ENCODE measurements at regions of chr14 and their contacts with region 1.

Region 1: GRCh38 chr14:68140111-68140741 is 320.6 kb downstream of the RAD51B start:
- DNase-seq: peak; percentile 99
- ATAC-seq: peak; percentile 70
- H3K4me3 ChIP-seq: peak overlapping the region; percentile 29; the same call in 1 of the 2 replicates
- H3K27ac ChIP-seq: peak overlapping the region; percentile 93
- H3K4me1 ChIP-seq: peaks cover 75% of the 10 kb centered on the region
- H3K27me3 ChIP-seq: no peaks in the 10 kb centered on the region
- CTCF ChIP-seq: no peak

Region 2: GRCh38 chr14:68016255-68016914 is 123.8 kb before region 1 on chr14:
- CTCF ChIA-PET with region 1: no interaction called
- POLR2A ChIA-PET with region 1: no interaction called
- intact Hi-C with region 1: loop called (anchors 5 kb)
- DNase-seq: no peak
- ATAC-seq: peak; percentile 44
- H3K4me3 ChIP-seq: no peak overlapping the region
- H3K27ac ChIP-seq: no peak overlapping the region
- H3K4me1 ChIP-seq: peaks cover 28% of the 10 kb centered on the region
- H3K27me3 ChIP-seq: no peaks in the 10 kb centered on the region
- CTCF ChIP-seq: no peak

Region 3: GRCh38 chr14:68047906-68048305 is 92.3 kb before region 1 on chr14:
- CTCF ChIA-PET with region 1: no interaction called
- POLR2A ChIA-PET with region 1: no interaction called
- intact Hi-C with region 1: loop called (anchors 1 kb)
- DNase-seq: peak; percentile 82
- ATAC-seq: peak; percentile 100
- H3K4me3 ChIP-seq: peak overlapping the region; percentile 33
- H3K27ac ChIP-seq: peak overlapping the region; percentile 21
- H3K4me1 ChIP-seq: peaks cover 9% of the 10 kb centered on the region
- H3K27me3 ChIP-seq: no peaks in the 10 kb centered on the region
- CTCF ChIP-seq: no peak

Region 4: DNA sequence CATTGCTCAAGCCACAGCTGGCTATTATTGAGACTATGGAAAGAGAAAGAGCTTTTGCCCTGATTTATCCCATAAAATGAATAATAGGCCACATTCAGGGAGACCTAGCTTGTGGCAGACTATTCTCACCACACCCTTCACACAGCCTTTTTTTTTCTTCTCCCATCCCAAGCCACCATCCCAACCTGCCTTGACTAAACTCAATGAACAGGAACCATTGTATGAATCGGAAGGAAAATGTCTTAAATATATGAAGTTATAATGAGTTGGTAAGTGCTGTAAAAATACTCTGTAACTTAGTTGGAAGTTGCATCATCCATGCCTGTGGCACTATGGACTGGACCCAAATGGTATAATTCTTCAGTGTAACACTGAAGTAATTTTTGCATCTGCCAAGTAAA is 17.7 kb after region 1 on chr14:
- CTCF ChIA-PET with region 1: no interaction called
- POLR2A ChIA-PET with region 1: interaction called, 5 read pairs
- intact Hi-C with region 1: loop called (anchors 2 kb)
- DNase-seq: peak; percentile 61
- ATAC-seq: peak; percentile 78
- H3K4me3 ChIP-seq: no peak overlapping the region
- H3K27ac ChIP-seq: peak overlapping the region; percentile 66
- H3K4me1 ChIP-seq: peaks cover 17% of the 10 kb centered on the region
- H3K27me3 ChIP-seq: no peaks in the 10 kb centered on the region
- CTCF ChIP-seq: no peak

Region 5: GRCh38 chr14:68172627-68173026 is 32.4 kb after region 1 on chr14:
- CTCF ChIA-PET with region 1: no interaction called
- POLR2A ChIA-PET with region 1: interaction called, 4 read pairs
- intact Hi-C with region 1: loop called (anchors 1 kb)
- DNase-seq: peak; percentile 83
- ATAC-seq: peak; percentile 91
- H3K4me3 ChIP-seq: no peak overlapping the region
- H3K27ac ChIP-seq: peak overlapping the region; percentile 69
- H3K4me1 ChIP-seq: peaks cover 49% of the 10 kb centered on the region
- H3K27me3 ChIP-seq: no peaks in the 10 kb centered on the region
- CTCF ChIP-seq: no peak

Region 6: GRCh38 chr14:68232300-68233055 is 92.3 kb after region 1 on chr14:
- CTCF ChIA-PET with region 1: no interaction called
- POLR2A ChIA-PET with region 1: no interaction called
- intact Hi-C with region 1: loop called (anchors 1 kb)
- DNase-seq: peak; percentile 99
- ATAC-seq: peak; percentile 87
- H3K4me3 ChIP-seq: peak overlapping the region; percentile 44
- H3K27ac ChIP-seq: peak overlapping the region; percentile 97
- H3K4me1 ChIP-seq: peaks cover 53% of the 10 kb centered on the region
- H3K27me3 ChIP-seq: no peaks in the 10 kb centered on the region
- CTCF ChIP-seq: no peak

Measured in PC-3 (cell line).